ENCODE measurements at regions of chr2 and their contacts with region 1.

Region 1: GRCh38 chr2:7239078-7239477 is 321.9 kb downstream of the RNF144A start:
- DNase-seq: no peak
- ATAC-seq: no peak
- H3K4me3 ChIP-seq: no peak overlapping the region
- H3K27ac ChIP-seq: no peak overlapping the region
- H3K4me1 ChIP-seq: peaks cover 0 to 16% (median 0%) of the 10 kb centered on the region in 12 donors
- H3K27me3 ChIP-seq: no peaks in the 10 kb centered on the region
- CTCF ChIP-seq: no peak
- POLR2A ChIP-seq: no peak

Region 2: GRCh38 chr2:7262727-7263126 is 23.6 kb after region 1 on chr2:
- intact Hi-C with region 1: loop called in 1 of 10 experiments (anchors 2 kb)
- DNase-seq: no peak
- ATAC-seq: peak in 1 of 4 donors; percentile 14
- H3K4me3 ChIP-seq: no peak overlapping the region
- H3K27ac ChIP-seq: no peak overlapping the region
- H3K4me1 ChIP-seq: no peaks in the 10 kb centered on the region
- H3K27me3 ChIP-seq: no peaks in the 10 kb centered on the region
- CTCF ChIP-seq: no peak
- POLR2A ChIP-seq: no peak

Region 3: GRCh38 chr2:7567646-7568045 is 328.6 kb after region 1 on chr2:
- intact Hi-C with region 1: no loop called
- DNase-seq: no peak
- ATAC-seq: no peak
- H3K4me3 ChIP-seq: no peak overlapping the region
- H3K27ac ChIP-seq: no peak overlapping the region
- H3K4me1 ChIP-seq: no peaks in the 10 kb centered on the region
- H3K27me3 ChIP-seq: no peaks in the 10 kb centered on the region
- CTCF ChIP-seq: no peak
- POLR2A ChIP-seq: no peak